Motor neuron (in vitro differentiated cells): ENCODE measurements at regions of chr9 and their contacts with region 1.

Region 1: GRCh38 chr9:1383899-1384455 is 333.8 kb downstream of the DMRT2 start:
- ATAC-seq: no peak
- H3K4me3 ChIP-seq: no peak overlapping the region
- H3K27ac ChIP-seq: no peak overlapping the region
- H3K4me1 ChIP-seq: no peaks in the 10 kb centered on the region

Region 2: DNA sequence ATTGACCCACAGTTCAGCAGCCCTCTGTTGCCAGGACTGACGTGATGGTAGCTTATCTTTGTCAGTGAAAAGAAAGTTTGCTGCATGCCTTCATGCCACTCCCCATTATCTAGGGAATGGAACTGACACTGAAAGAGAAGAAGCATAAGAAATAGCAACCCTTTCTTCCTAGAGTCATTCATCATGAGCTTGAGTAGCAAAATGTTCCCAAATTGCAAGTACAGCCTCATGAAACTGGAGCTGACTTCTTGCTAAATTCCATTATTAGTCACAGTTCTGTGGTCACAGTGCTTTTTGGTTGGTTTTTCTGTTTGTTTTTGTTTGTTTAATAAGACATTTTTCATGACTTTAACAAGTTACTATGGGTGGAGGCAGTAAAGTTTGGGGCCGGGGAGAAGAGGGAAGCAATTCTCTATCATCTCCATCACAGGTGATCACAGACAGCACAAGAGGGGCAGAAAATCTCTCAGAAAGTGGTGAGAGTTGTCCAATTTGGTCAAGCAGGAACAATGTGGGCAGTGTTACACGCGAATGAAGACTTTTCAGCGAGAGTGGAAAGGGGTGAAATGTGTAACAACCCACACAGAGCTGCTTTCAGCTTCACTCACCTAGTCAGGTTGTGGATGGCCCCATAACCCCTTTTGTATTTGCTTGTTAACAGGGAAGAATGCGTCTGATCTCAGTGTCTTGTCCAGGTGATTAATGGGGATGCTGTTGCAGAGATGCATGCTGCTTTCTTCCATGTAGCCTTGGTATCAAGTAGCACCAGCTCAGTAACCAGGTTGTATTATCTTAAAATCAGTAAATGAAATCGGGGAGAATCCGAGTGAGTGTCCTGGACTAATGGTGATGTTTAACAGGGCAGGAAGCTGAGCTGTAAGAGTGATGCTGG is 106.6 kb after region 1 on chr9:
- in situ Hi-C with region 1: loop called in 1 of 9 experiments (anchors 25 kb)
- ATAC-seq: peak in 1 of 8 experiments; percentile 41
- H3K4me3 ChIP-seq: no peak overlapping the region
- H3K27ac ChIP-seq: no peak overlapping the region
- H3K4me1 ChIP-seq: peaks cover 0 to 13% of the 10 kb centered on the region in 2 donors